ENCODE measurements at regions of chr15 and their contacts with region 1.

Region 1: GRCh38 chr15:67433495-67434099 is 87.3 kb upstream of the C15orf61 start:
- DNase-seq: peak; percentile 69 to 82
- ATAC-seq: peak; percentile 89 to 96
- H3K4me3 ChIP-seq: no peak overlapping the region
- H3K27ac ChIP-seq: no peak overlapping the region
- H3K4me1 ChIP-seq: peaks cover 8% of the 10 kb centered on the region
- CTCF ChIP-seq: peak; percentile 71
- EP300 ChIP-seq: no peak
- POLR2A ChIP-seq: no peak
- RAD21 ChIP-seq: peak; percentile 78 to 91

Region 2: GRCh38 chr15:67340630-67341029 is 93.0 kb before region 1 on chr15:
- CTCF ChIA-PET with region 1: no interaction called
- POLR2A ChIA-PET with region 1: no interaction called
- DNase-seq: no peak
- ATAC-seq: no peak
- H3K4me3 ChIP-seq: no peak overlapping the region
- H3K27ac ChIP-seq: no peak overlapping the region
- H3K4me1 ChIP-seq: peaks cover 9% of the 10 kb centered on the region; the same call in 2 of the 3 replicates
- CTCF ChIP-seq: no peak
- EP300 ChIP-seq: no peak
- POLR2A ChIP-seq: no peak
- RAD21 ChIP-seq: no peak

Region 3: DNA sequence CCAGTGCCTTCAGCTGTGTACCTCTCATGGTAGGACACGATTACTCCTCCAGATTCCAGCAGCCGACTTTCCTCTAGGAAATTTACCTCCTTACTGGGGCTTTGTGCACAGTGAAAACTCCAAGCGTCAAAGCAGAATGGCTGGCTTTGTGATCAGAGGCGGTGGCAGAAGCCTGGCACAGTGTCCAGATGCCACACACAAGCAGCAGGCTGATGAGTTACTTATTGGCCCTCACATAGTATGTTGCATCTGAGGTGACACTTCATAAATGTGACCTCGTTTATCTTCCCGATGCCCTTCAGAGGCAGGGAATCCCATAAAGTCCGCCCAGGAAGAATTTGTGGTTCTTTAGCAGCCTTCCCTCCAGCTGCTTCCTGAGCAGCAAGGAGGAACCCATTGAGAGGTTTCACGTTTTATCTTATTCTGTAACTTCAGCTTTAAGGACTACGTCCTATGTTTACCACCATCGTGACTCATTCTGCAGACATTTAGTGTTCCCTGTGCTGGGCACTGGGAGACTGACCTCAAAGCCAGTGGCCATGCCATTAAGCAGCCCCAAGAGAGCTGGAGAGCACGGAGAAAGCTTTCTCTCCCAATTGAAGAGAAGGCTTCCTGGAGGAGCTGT is 19.7 kb before region 1 on chr15:
- CTCF ChIA-PET with region 1: interaction called, 18 read pairs
- POLR2A ChIA-PET with region 1: no interaction called
- DNase-seq: peak; percentile 32 to 77
- ATAC-seq: peak; percentile 82 to 91
- H3K4me3 ChIP-seq: no peak overlapping the region
- H3K27ac ChIP-seq: peak overlapping the region; percentile 66 to 82
- H3K4me1 ChIP-seq: peaks cover 44% of the 10 kb centered on the region
- CTCF ChIP-seq: no peak
- EP300 ChIP-seq: no peak
- POLR2A ChIP-seq: no peak
- RAD21 ChIP-seq: no peak

Region 4: DNA sequence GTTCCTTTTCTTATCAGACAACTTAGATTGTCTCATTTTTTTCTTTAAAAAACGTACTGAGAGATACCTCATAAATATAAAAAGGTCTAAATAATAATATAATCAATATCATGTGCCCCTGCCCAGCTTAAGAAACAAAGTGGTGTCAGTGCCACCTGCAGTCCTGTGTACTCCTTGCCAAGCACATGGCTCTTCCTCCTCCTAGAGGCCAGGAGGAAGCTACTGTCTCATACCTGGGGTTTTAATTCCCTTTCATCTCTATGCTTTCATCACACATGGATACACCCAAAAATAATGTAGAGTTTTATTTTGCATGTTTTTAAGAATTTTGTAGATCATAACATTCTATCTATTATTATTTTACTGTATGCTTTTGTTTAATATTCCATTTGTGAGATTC is 11.3 kb before region 1 on chr15:
- CTCF ChIA-PET with region 1: interaction called, 22 read pairs
- POLR2A ChIA-PET with region 1: no interaction called
- DNase-seq: peak in 1 of 2 experiments; percentile 33
- ATAC-seq: peak in 1 of 2 experiments; percentile 72; a peak in 3 of 6 replicates
- H3K4me3 ChIP-seq: no peak overlapping the region
- H3K27ac ChIP-seq: no peak overlapping the region
- H3K4me1 ChIP-seq: peaks cover 3% of the 10 kb centered on the region
- CTCF ChIP-seq: peak; percentile 21; the same call in 1 of the 3 replicates
- EP300 ChIP-seq: no peak
- POLR2A ChIP-seq: no peak
- RAD21 ChIP-seq: peak; percentile 35 to 56; a peak in 3 of 5 replicates

Region 5: DNA sequence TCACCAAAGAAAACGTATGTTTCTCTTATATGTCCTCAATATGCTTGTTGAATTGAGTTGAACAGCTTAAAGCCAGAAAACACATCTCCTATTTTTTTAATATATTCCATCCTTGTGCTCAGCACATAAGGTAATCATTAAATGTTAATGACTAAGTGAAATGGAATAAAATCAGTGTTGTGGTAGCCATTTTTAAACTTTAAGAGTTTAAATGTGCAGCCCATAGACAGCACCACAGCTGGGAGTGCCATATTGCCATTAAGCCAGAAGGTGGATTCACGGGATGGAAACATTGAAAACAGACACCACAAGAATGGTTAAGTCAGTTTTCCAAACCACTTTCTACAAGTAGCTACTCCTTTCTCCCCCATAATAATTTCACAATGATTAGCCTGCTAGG is 10.5 kb after region 1 on chr15:
- CTCF ChIA-PET with region 1: interaction called, 13 read pairs
- POLR2A ChIA-PET with region 1: no interaction called
- DNase-seq: no peak
- ATAC-seq: no peak
- H3K4me3 ChIP-seq: no peak overlapping the region
- H3K27ac ChIP-seq: no peak overlapping the region
- H3K4me1 ChIP-seq: no peaks in the 10 kb centered on the region
- CTCF ChIP-seq: no peak
- EP300 ChIP-seq: no peak
- POLR2A ChIP-seq: no peak
- RAD21 ChIP-seq: no peak

Region 6: DNA sequence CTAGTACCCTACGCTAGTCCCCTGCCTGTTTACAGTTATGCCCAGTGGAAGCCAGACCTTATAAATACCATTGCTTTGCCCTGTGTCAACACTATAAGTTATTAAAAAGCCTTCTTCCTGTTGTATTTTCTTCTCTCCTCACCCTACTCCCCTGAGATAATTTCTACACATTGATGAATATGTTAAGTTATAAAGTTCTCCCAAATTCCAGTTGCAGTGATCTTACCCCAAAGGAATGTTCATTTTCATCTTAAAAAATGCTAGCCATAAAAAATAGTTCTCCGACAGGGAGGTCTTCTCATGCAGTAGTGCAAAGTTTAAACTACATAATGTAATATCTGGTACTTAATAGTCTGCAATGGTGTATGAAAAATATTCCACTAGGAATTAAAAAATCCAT is 167.5 kb after region 1 on chr15:
- CTCF ChIA-PET with region 1: no interaction called
- POLR2A ChIA-PET with region 1: no interaction called
- DNase-seq: no peak
- ATAC-seq: no peak
- H3K4me3 ChIP-seq: no peak overlapping the region
- H3K27ac ChIP-seq: no peak overlapping the region
- H3K4me1 ChIP-seq: no peaks in the 10 kb centered on the region
- CTCF ChIP-seq: no peak
- EP300 ChIP-seq: no peak
- POLR2A ChIP-seq: no peak
- RAD21 ChIP-seq: no peak

Measured in A549 (cell line).